Psoas muscle (tissue), 8 donors: ENCODE measurements at regions of chr9 and their contacts with region 1.

Region 1: DNA sequence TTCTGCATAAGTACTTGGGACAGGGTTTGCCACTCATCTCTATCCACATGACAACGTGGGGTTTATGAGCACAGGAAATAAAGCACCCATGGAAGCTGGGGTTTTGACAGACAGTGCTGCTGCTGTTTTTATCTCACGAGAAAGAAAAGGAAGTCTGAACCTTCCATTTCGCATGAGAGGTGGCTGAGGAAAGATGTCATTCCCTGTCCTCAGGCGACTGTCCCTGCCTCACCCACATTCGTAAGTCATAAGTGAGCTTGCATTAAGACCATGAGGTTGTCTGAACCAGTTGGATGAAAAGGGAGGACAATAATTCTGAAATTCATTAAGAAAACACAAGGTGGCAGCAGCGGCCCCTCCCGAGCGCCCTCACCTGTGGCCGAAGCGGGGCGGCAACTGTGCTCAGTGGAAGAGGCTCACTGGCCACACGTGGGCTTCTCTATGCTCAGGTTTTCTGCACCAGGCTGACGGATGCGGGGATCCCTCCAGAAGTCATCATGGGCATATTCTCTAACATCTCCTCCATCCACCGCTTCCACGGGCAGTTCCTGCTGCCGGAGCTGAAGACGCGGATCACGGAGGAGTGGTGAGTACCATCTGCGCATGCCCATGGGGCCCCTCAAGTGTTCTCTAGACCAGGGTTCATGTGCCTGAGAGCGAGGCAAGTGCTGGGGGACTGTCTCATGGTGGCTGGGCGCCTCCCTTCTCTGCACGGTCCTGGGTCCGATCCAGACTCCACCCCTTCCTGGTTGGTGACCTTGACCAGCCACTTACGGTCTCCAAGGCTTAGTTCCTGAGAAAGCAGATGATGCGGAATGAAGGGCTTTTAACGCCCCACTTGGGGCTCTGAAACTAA is 54.7 kb upstream of the SUSD3 start:
- DNase-seq: peak in 1 of 2 donors; percentile 73
- ATAC-seq: peak; percentile 67 to 79 (median 72)
- H3K4me3 ChIP-seq: peak overlapping the region; percentile 51
- H3K27ac ChIP-seq: no peak overlapping the region
- H3K4me1 ChIP-seq: no peaks in the 10 kb centered on the region
- H3K27me3 ChIP-seq: no peaks in the 10 kb centered on the region
- CTCF ChIP-seq: peak; percentile 66

Region 2: DNA sequence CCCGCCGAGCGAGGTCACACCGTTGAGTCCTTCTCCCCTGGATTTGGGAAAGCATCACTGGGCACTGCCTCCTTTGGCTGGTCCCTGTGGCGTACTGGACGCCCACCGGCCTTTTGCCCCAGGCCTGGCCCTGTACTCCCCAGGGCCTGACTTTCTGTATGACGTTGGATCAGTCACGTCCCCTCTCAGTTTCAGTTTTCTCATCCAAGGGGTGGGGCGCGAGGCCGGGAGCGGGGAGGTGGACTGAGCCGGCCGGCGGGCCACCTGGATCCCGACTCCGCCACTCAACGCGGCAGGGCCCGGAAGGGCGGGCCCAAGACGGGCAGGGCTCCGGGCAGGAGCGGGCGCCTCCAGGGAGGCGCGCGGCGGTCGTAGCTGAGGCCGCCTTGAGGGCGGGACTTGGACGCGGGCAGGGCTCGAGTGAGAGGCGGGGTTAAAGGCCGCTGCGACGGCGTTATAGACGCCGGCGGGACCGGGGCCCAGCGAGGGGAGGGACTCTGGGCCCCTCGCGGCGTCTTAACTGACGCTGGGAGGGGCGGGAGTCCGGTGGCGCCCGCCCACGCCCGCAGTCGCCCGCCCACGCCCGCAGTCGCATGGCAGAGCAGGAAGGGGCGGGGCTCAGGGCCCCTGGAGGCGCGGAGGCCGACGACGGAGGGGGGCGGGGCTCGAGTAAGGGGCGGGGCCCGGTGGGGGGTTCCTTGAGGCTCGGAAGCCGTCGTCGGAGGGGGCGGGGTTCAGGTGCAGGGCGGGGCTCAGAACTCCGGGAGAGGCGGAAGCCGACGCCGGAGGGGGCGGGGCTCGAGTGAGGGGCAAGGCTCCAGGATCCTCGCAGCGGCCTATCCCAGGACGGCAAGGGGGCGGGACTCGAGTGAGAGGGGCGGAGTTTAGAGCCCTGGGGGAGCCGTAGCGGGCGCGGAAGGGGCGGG is 91.7 kb after region 1 on chr9:
- intact Hi-C with region 1: loop called in 1 of 2 experiments (anchors 10 kb)
- DNase-seq: peak; percentile 100
- ATAC-seq: peak; percentile 82 to 85 (median 84)
- H3K4me3 ChIP-seq: peak overlapping the region; percentile 99
- H3K27ac ChIP-seq: peak overlapping the region; percentile 98
- H3K4me1 ChIP-seq: peaks cover 32% of the 10 kb centered on the region
- H3K27me3 ChIP-seq: no peaks in the 10 kb centered on the region
- CTCF ChIP-seq: no peak

Region 3: DNA sequence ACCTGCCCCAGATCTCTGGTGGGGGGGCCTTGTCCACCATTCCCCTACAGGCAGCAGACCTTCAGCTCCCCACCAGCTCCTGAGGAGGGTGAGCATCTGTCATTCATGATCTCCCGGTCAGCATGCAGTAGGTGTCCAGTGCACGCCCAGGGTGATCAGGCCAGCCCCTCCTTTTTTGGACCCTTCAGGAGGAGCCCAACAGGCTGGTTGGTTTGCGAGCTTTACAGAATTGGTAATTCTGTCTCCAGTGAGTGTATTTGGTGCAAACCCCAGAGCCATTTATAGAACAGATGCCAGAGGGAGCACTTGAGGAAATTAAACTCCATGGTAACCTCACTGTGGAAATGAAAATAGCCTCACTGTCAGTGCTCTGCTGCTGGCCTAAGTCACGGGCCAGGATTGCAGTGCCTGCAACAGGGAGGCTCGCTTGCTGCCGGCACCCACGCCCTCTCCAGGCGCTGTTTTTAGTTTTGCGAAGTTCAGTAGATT is 203.6 kb after region 1 on chr9:
- intact Hi-C with region 1: no loop called
- DNase-seq: peak in 1 of 2 donors; percentile 84
- ATAC-seq: peak; percentile 73 to 89 (median 86)
- H3K4me3 ChIP-seq: peak overlapping the region; percentile 24
- H3K27ac ChIP-seq: peak overlapping the region; percentile 78
- H3K4me1 ChIP-seq: peaks cover 55% of the 10 kb centered on the region
- H3K27me3 ChIP-seq: no peaks in the 10 kb centered on the region
- CTCF ChIP-seq: no peak